IMR-90 (cell line): ENCODE measurements at regions of chr3 and their contacts with region 1.

Region 1: GRCh38 chr3:113844622-113845222 is 6.1 kb downstream of the GRAMD1C start:
- DNase-seq: peak; percentile 40
- ATAC-seq: peak; percentile 80
- H3K4me3 ChIP-seq: no peak overlapping the region
- H3K27ac ChIP-seq: no peak overlapping the region
- H3K4me1 ChIP-seq: peaks cover 4% of the 10 kb centered on the region; the same call in 1 of the 2 replicates
- H3K27me3 ChIP-seq: no peaks in the 10 kb centered on the region
- CTCF ChIP-seq: peak; percentile 66
- POLR2A ChIP-seq: no peak
- RAD21 ChIP-seq: peak; percentile 62

Region 2: DNA sequence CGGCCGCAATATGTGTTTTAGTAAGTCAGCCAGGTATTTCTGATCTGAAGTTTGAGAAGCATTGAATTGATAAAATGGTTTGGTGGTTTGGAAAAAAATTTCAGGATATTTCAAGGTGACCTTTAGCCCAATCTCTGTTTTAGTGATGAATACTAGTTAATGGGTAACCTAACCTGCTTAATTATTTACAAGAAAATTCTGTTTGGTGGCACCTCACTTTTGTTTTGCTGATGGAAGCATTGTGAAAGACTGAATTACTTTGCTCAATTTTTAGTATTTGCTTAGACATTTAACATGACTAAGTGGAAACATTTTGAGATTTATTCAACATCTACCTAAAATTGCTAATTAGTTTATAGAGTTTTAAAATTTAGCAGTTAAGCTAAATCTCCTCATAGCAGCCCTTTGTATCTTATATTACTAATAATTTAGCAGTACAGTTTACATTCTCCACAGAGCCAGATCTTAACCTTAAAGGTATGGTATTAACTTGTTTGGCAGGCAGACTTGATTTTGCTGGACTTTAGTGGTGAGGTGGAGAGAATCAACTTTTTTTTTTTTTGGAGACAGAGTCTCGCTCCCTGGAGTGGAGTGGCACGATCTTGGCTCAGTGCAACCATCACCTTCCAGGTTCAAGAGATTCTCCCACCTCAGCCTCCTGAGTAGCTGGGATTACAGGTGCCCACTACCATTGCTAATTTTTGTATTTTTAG is 29.2 kb after region 1 on chr3:
- CTCF ChIA-PET with region 1: no interaction called
- POLR2A ChIA-PET with region 1: no interaction called
- dilution Hi-C with region 1: no loop called
- in situ Hi-C with region 1: no loop called
- intact Hi-C with region 1: no loop called
- DNase-seq: no peak
- ATAC-seq: no peak
- H3K4me3 ChIP-seq: no peak overlapping the region
- H3K27ac ChIP-seq: no peak overlapping the region
- H3K4me1 ChIP-seq: no peaks in the 10 kb centered on the region
- H3K27me3 ChIP-seq: no peaks in the 10 kb centered on the region
- CTCF ChIP-seq: no peak
- POLR2A ChIP-seq: no peak
- RAD21 ChIP-seq: no peak

Region 3: GRCh38 chr3:113912552-113913236 is 68.0 kb after region 1 on chr3:
- CTCF ChIA-PET with region 1: interaction called, 4 read pairs
- POLR2A ChIA-PET with region 1: no interaction called
- dilution Hi-C with region 1: no loop called
- in situ Hi-C with region 1: loop called (anchors 5 kb)
- intact Hi-C with region 1: loop called (anchors 1 kb)
- DNase-seq: peak; percentile 77
- ATAC-seq: peak; percentile 87
- H3K4me3 ChIP-seq: no peak overlapping the region
- H3K27ac ChIP-seq: no peak overlapping the region
- H3K4me1 ChIP-seq: 0 out of 2 replicates have a peak, but pooled peaks cover 2% of the 10 kb centered on the region
- H3K27me3 ChIP-seq: no peaks in the 10 kb centered on the region
- CTCF ChIP-seq: peak; percentile 68
- POLR2A ChIP-seq: no peak
- RAD21 ChIP-seq: peak; percentile 74

Region 4: DNA sequence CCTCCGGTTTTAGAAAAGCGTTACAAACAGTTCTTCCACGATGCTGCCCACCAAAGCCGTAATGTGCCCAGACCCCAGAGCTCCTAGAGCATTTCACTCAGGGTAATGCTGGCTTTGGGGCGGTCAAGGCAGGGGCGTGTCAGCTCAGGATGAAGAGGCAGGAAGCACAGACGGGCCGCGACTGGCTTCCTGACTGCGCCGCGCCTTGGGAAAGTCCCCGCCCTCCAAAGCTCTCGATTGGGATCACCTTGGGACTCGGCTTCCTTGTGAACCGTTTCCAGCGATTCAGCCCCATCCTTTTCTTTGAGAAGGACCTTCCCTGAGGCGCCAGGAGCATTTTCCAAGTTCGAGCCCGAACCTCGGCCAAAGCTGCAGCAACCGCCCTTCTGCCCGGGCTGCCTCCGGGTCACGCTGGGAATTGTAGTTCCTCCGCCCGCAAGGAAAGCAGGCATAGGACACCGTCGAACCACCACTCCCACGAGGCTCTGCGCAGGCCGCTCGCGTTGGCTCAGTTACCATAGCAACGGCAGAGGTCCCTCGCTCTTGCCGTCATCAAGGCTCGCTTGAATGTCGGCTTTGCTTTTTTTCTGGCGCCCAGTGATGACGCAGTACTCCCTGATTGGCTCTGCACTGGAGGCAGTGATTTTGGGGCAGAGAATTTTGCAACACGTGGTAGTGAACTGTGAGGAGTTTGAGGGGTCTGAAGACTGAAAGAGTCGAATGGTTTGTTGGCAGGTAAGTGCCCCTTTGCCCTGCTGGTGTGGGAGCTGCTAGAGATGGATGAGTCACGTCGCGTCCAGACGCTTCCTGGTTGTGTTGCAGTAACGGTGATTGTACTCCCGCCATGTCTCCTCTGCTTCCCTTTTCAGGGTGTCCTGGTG is 211.6 kb after region 1 on chr3 and contains the starts of genes CCDC191 and QTRT2:
- CTCF ChIA-PET with region 1: no interaction called
- POLR2A ChIA-PET with region 1: no interaction called
- dilution Hi-C with region 1: no loop called
- in situ Hi-C with region 1: loop called (anchors 10 kb)
- intact Hi-C with region 1: loop called (anchors 5 kb)
- DNase-seq: peak; percentile 99
- ATAC-seq: peak; percentile 99
- H3K4me3 ChIP-seq: peak within 1 kb of the TSS; percentile 76
- H3K27ac ChIP-seq: peak within 1 kb of the TSS; percentile 70
- H3K4me1 ChIP-seq: no peaks in the 10 kb centered on the region
- H3K27me3 ChIP-seq: no peaks in the 10 kb centered on the region
- CTCF ChIP-seq: no peak
- POLR2A ChIP-seq: no peak; the same call in 1 of the 2 replicates
- RAD21 ChIP-seq: no peak
- total RNA-seq, gene CCDC191: 0.72 and 0.83 TPM in 2 replicates
- total RNA-seq, gene QTRT2: 15.6 and 20.3 TPM in 2 replicates

Region 5: GRCh38 chr3:114152519-114153151 is 307.9 kb after region 1 on chr3:
- CTCF ChIA-PET with region 1: no interaction called
- POLR2A ChIA-PET with region 1: no interaction called
- dilution Hi-C with region 1: no loop called
- in situ Hi-C with region 1: no loop called
- intact Hi-C with region 1: loop called (anchors 2 kb)
- DNase-seq: peak; percentile 61
- ATAC-seq: peak; percentile 90
- H3K4me3 ChIP-seq: peak overlapping the region; percentile 50
- H3K27ac ChIP-seq: no peak overlapping the region
- H3K4me1 ChIP-seq: no peaks in the 10 kb centered on the region
- H3K27me3 ChIP-seq: no peaks in the 10 kb centered on the region; the same call in 1 of the 2 replicates
- CTCF ChIP-seq: peak; percentile 78
- POLR2A ChIP-seq: no peak
- RAD21 ChIP-seq: peak; percentile 70

Region 6: DNA sequence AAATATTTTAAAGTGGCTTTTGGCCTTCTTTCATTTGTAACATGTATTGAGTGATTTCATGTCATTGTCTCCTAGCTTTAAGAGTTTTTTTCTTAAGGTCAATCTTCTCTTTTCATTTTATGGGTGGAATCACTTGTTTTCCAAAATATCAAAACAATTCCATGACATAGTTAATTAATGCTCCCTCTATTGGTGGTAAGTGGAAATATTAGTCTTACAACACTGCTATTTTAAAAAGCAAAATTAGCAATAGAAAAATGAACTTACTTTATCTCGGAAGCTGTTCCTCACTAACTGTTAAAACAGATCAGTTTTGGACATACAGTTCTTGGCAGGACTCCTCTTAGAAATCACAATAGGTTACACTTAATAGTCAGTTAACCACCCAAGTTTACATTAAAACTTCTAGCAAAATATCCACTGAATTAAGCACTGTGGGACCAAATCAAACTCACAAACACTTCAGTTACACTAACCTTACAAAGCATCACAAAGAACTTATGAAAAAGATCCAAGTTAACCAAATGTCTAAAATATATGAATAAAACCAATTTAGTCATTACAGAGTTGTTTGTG is 491.5 kb after region 1 on chr3:
- CTCF ChIA-PET with region 1: interaction called, 3 read pairs
- POLR2A ChIA-PET with region 1: no interaction called
- dilution Hi-C with region 1: no loop called
- in situ Hi-C with region 1: no loop called
- intact Hi-C with region 1: loop called (anchors 10 kb)
- DNase-seq: peak; percentile 18
- ATAC-seq: no peak
- H3K4me3 ChIP-seq: no peak overlapping the region
- H3K27ac ChIP-seq: no peak overlapping the region
- H3K4me1 ChIP-seq: no peaks in the 10 kb centered on the region
- H3K27me3 ChIP-seq: no peaks in the 10 kb centered on the region
- CTCF ChIP-seq: peak; percentile 55
- POLR2A ChIP-seq: no peak
- RAD21 ChIP-seq: peak; percentile 24